ENCODE measurements at regions of chrX and their contacts with region 1.

Region 1: GRCh38 chrX:47370278-47370677 is at the start of gene ZNF157:
- DNase-seq: no peak
- H3K4me3 Mint-ChIP-seq: no peak within 1 kb of the TSS
- H3K27ac Mint-ChIP-seq: no peak within 1 kb of the TSS
- H3K4me1 Mint-ChIP-seq: no peaks in the 10 kb centered on the region
- H3K27me3 Mint-ChIP-seq: no peaks in the 10 kb centered on the region
- CTCF ChIP-seq: no peak
- total RNA-seq, gene ZNF157: not detected in 2 replicates

Region 2: DNA sequence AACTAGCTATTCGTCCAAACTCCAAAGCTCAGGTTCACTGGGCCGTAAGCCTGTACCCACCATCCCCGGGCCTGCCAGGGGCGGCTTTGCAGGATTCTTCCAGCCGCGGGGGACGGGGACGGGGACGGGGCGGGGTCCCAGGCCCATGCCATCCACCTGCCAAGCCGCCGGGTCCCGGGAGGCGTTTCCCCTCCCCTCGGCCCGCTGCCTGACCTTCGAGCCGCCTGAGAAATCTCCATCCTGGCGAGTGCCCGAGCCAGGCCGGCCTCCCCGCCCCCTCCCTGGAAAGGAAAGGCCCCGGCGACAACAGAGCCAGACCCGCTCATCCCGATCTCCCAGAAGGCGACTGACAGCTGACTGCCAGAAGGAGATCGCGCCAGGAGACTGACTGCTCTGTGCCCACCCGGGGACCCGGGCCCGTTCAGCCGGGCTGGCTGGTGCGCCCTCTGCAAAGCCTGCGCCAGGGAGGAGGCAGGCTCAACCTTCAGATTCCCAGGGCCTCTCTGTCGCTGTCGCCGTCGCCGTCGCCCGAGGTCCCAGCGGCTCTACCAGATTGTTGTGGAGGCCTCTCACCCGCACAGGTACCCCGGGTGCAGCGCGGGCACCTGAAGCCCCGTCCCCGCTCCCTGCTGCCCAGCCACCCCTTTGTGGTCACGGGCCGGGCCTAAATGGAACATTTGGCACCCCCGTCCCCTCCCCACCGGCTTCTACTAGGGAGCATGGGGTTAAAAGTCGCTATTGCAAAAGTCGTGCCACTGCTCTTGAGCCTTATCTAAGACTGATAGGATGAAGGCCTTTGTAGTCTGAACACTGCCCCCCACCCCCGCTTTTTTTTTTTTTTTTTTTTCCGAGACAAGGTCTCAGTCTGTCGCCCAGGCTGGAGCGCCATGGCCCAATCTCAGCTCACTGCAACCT is 291.9 kb before region 1 on chrX and contains the start of gene RGN:
- CTCF ChIA-PET with region 1: no interaction called
- POLR2A ChIA-PET with region 1: no interaction called
- intact Hi-C with region 1: no loop called
- DNase-seq: no peak
- H3K4me3 Mint-ChIP-seq: no peak within 1 kb of the TSS
- H3K27ac Mint-ChIP-seq: no peak within 1 kb of the TSS
- H3K4me1 Mint-ChIP-seq: no peaks in the 10 kb centered on the region
- H3K27me3 Mint-ChIP-seq: peaks cover 32% of the 10 kb centered on the region
- CTCF ChIP-seq: no peak
- total RNA-seq, gene RGN: not detected in 2 replicates

Region 3: GRCh38 chrX:47247206-47247998 is 122.9 kb before region 1 on chrX:
- CTCF ChIA-PET with region 1: no interaction called
- POLR2A ChIA-PET with region 1: no interaction called
- intact Hi-C with region 1: no loop called
- DNase-seq: no peak
- H3K4me3 Mint-ChIP-seq: no peak overlapping the region
- H3K27ac Mint-ChIP-seq: no peak overlapping the region
- H3K4me1 Mint-ChIP-seq: no peaks in the 10 kb centered on the region
- H3K27me3 Mint-ChIP-seq: peaks cover 61% of the 10 kb centered on the region
- CTCF ChIP-seq: no peak

Region 4: DNA sequence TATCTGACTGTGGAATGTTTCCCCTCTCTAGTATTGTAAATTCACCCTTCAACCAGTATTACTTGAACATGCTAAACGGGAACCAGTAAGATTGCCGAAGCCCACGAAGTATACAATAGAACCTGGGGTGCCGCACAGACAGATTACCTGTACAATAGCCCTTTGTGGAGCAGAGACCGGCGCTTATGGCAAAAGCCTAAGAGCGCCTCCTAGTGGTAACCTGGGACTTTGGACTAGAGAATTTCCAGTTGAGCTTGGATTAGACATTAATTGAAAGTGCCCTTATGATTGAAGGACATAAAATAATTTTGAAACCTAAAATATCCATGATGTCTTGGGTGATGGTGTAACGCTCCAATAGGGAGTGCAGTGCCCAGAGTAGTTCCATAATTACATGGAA is 14.2 kb after region 1 on chrX:
- CTCF ChIA-PET with region 1: interaction called, 20 read pairs
- POLR2A ChIA-PET with region 1: no interaction called
- intact Hi-C with region 1: no loop called
- DNase-seq: peak; percentile 75
- H3K4me3 Mint-ChIP-seq: no peak overlapping the region
- H3K27ac Mint-ChIP-seq: no peak overlapping the region
- H3K4me1 Mint-ChIP-seq: peaks cover 5% of the 10 kb centered on the region
- H3K27me3 Mint-ChIP-seq: peaks cover 25% of the 10 kb centered on the region
- CTCF ChIP-seq: peak; percentile 60